Mammary epithelial cell (primary cell): ENCODE measurements at regions of chr14 and their contacts with region 1.

Region 1: DNA sequence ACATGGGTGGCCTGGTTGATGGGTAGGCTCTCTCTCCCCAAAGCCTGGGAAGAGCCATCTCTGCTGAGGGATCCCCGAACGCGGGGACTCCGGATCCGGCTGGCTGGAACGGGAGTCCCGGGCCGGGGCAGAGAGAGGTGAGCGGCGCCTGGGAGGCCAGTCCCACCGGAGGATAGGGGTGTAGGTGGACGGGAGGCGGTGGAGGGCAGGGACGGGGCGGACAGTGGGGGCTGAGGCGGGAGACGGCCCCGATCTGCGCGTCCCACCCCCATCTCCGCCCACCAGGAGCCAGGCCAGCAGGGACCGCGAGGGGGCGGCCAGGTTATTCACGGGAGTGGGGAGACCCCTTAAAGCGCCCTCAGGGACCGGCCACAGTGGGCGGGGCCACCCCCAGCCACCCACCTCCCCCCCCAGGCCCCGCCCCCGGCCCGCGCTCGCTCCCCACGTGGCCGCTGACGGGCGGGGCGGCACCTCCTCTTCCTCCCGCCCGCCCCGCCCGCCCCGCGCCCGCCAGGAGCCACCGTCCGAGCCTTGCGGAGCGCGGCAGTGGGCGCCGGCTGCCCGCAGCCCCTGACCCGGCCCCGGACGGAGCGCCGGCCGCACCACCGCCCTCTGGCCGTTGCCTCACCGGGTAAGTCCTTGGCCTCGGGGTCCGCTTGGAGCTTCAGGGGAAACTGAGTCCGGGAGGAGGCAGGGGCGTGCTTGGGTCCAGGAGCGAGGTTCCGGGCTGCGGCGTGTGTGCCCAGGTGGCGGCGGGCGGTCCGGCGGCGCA is at the start of gene INF2:
- DNase-seq: peak; percentile 57
- H3K4me3 ChIP-seq: peak within 1 kb of the TSS; percentile 71 to 98 (median 89)
- H3K27ac ChIP-seq: peak within 1 kb of the TSS; percentile 61
- H3K4me1 ChIP-seq: peaks cover 70% of the 10 kb centered on the region
- H3K27me3 ChIP-seq: no peaks in the 10 kb centered on the region
- CTCF ChIP-seq: no peak
- total RNA-seq, gene INF2: 65.7 to 125 TPM

Region 2: GRCh38 chr14:104650057-104650981 is 39.0 kb before region 1 on chr14:
- CTCF ChIA-PET with region 1: no interaction called
- dilution Hi-C with region 1: no loop called
- in situ Hi-C with region 1: no loop called
- intact Hi-C with region 1: loop called (anchors 2 kb)
- DNase-seq: no peak
- H3K4me3 ChIP-seq: peak overlapping the region; percentile 48 to 63 (median 59)
- H3K27ac ChIP-seq: no peak overlapping the region
- H3K4me1 ChIP-seq: peaks cover 9% of the 10 kb centered on the region
- H3K27me3 ChIP-seq: no peaks in the 10 kb centered on the region
- CTCF ChIP-seq: peak; percentile 83 to 99